Common myeloid progenitor, CD34-positive (primary cell): ENCODE measurements at regions of chrX and their contacts with region 1.

Region 1: GRCh38 chrX:133792198-133792953 is 193.0 kb downstream of the GPC3 start:
- DNase-seq: peak; percentile 70 to 86 (median 81)
- H3K4me3 ChIP-seq: peak overlapping the region in 3 of 7 experiments; percentile 21 to 64 (median 49)
- H3K27ac ChIP-seq: no peak overlapping the region
- H3K4me1 ChIP-seq: no peaks in the 10 kb centered on the region
- H3K27me3 ChIP-seq: no peaks in the 10 kb centered on the region

Region 2: DNA sequence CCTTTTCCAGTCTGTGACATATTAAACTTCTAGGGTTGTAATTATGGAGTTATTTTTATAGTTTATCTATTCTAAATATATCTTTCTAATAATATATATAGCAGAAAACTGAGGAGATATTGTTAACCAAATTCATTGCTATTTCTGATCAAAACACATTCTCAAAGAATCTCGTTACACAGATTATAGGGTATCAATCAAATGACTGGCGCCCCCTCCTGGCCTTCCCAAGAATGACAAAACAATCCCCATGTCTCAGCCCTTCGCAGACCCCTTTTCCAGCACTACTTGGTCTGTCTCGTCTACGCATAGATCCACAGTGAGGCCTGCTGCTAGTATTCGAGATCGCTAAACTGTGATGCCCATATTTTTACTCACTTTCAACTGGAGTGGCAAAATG is 16.3 kb before region 1 on chrX:
- CTCF ChIA-PET with region 1: interaction called, 10 read pairs
- POLR2A ChIA-PET with region 1: no interaction called
- DNase-seq: peak; percentile 9 to 28 (median 19)
- H3K4me3 ChIP-seq: no peak overlapping the region
- H3K27ac ChIP-seq: no peak overlapping the region
- H3K4me1 ChIP-seq: no peaks in the 10 kb centered on the region
- H3K27me3 ChIP-seq: no peaks in the 10 kb centered on the region

Region 3: DNA sequence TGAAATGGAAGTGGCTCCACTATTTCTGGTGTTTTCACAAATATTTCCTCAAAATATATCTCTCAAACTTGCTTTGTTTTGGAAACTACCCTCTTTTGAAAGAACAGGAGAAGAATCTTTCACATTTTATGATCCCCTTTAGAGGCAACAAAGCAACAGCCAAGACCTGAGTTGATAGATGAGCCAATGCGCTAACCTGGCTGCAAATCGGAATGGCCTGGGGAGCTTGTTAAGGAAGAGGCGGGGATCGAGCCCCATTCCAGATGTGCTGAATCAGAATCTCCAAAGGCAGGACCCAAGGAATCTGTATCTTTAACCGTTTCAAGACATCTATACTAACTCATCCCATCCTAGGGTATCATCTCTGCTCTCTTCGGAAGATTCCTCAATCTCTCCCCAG is 11.7 kb after region 1 on chrX:
- CTCF ChIA-PET with region 1: no interaction called
- POLR2A ChIA-PET with region 1: no interaction called
- DNase-seq: no peak
- H3K4me3 ChIP-seq: no peak overlapping the region
- H3K27ac ChIP-seq: no peak overlapping the region
- H3K4me1 ChIP-seq: no peaks in the 10 kb centered on the region
- H3K27me3 ChIP-seq: peaks cover 0 to 3% (median 0%) of the 10 kb centered on the region in 5 experiments

Region 4: GRCh38 chrX:133859860-133860259 is 67.5 kb after region 1 on chrX:
- CTCF ChIA-PET with region 1: no interaction called
- POLR2A ChIA-PET with region 1: no interaction called
- DNase-seq: no peak
- H3K4me3 ChIP-seq: no peak overlapping the region
- H3K27ac ChIP-seq: no peak overlapping the region
- H3K4me1 ChIP-seq: no peaks in the 10 kb centered on the region
- H3K27me3 ChIP-seq: no peaks in the 10 kb centered on the region